A673 (cell line): ENCODE measurements at regions of chr1 and their contacts with region 1.

Region 1: GRCh38 chr1:205591522-205592351 is 40.1 kb downstream of the ELK4 start:
- DNase-seq: peak; percentile 84
- H3K4me3 ChIP-seq: no peak overlapping the region
- H3K27ac ChIP-seq: no peak overlapping the region
- H3K4me1 ChIP-seq: no peaks in the 10 kb centered on the region
- H3K27me3 ChIP-seq: peaks cover 10% of the 10 kb centered on the region
- CTCF ChIP-seq: peak; percentile 97

Region 2: GRCh38 chr1:205535866-205536758 is 55.6 kb before region 1 on chr1:
- CTCF ChIA-PET with region 1: no interaction called
- POLR2A ChIA-PET with region 1: no interaction called
- intact Hi-C with region 1: loop called (anchors 5 kb)
- DNase-seq: no peak
- H3K4me3 ChIP-seq: no peak overlapping the region
- H3K27ac ChIP-seq: no peak overlapping the region
- H3K4me1 ChIP-seq: no peaks in the 10 kb centered on the region
- H3K27me3 ChIP-seq: peaks cover 4% of the 10 kb centered on the region
- CTCF ChIP-seq: no peak

Region 3: DNA sequence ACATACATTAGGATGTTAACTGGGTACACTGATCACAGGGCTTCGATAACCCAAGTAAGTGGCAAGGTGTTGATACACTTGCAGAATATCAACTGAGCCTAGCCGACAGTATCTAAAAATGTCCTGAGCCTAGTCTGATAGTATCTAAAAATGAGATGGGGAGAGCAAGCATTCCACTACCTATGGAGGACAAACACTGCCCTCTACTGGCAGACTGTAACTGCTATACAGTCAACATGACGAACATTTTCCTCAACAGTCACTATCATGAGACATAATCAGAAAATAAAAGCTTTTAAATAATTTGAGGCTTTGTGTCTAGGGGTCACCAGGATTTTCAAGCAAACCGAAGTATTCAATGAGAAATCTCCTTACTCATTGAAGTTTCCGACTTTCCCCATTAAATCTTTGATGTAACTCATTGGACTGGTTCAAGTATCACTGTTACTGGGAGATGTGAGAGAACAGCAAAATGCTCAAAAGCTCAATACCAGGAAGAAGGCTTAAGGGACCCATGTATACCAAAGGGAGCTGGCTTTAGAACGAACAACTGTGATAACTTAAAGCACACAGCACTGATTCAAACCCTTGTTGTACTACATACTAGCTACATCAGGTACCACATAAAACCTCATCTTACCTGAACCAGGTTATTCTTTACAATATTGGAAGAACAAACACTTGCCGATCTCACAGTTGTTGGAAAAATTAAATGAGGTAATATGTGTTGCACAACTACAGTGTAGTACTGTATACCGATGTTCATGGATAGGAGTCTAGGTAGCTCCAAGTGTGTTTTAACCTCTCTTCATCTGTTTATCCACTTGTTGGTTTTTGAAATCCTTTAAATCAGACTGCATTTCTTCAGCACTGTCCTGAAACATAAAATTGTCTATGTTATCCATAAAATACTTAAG is 119.6 kb after region 1 on chr1:
- CTCF ChIA-PET with region 1: interaction called, 17 read pairs
- POLR2A ChIA-PET with region 1: interaction called, 15 read pairs
- intact Hi-C with region 1: loop called (anchors 2 kb)
- DNase-seq: peak; percentile 82
- H3K4me3 ChIP-seq: no peak overlapping the region
- H3K27ac ChIP-seq: no peak overlapping the region
- H3K4me1 ChIP-seq: no peaks in the 10 kb centered on the region
- H3K27me3 ChIP-seq: no peaks in the 10 kb centered on the region
- CTCF ChIP-seq: peak; percentile 94